Aorta (tissue), 5 donors: ENCODE measurements at regions of chr2 and their contacts with region 1.

Region 1: DNA sequence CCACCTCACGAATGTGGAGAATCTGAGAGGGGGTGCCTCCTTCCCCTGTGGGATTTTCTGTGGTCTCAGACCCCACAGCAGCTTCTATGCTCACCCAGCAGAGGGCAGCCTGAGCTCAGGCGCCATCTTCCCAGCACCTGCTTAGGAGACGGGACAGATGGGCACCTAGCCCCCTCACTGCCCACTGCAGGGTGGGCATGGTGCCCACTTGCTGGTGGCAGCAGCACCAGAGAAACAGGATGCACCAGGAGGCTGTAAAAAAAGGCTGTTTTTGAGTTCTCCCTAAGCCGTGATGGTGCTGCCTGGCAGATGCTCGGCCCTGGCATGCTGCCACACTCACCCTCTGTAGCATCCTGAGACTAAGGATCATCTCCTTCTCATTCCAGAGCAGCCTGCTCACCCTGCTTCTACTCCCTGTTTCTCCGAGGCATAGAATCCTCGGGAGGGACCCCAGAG is 19.1 kb upstream of the SLC20A1 start:
- DNase-seq: peak; percentile 79 to 88
- ATAC-seq: peak; percentile 87
- H3K4me3 ChIP-seq: no peak overlapping the region
- H3K27ac ChIP-seq: peak overlapping the region in 1 of 2 donors; percentile 91
- H3K4me1 ChIP-seq: no peaks in the 10 kb centered on the region
- H3K27me3 ChIP-seq: no peaks in the 10 kb centered on the region

Region 2: GRCh38 chr2:112519506-112519905 is 107.1 kb before region 1 on chr2:
- intact Hi-C with region 1: no loop called
- DNase-seq: no peak
- ATAC-seq: no peak
- H3K4me3 ChIP-seq: no peak overlapping the region
- H3K27ac ChIP-seq: no peak overlapping the region
- H3K4me1 ChIP-seq: no peaks in the 10 kb centered on the region
- H3K27me3 ChIP-seq: no peaks in the 10 kb centered on the region

Region 3: DNA sequence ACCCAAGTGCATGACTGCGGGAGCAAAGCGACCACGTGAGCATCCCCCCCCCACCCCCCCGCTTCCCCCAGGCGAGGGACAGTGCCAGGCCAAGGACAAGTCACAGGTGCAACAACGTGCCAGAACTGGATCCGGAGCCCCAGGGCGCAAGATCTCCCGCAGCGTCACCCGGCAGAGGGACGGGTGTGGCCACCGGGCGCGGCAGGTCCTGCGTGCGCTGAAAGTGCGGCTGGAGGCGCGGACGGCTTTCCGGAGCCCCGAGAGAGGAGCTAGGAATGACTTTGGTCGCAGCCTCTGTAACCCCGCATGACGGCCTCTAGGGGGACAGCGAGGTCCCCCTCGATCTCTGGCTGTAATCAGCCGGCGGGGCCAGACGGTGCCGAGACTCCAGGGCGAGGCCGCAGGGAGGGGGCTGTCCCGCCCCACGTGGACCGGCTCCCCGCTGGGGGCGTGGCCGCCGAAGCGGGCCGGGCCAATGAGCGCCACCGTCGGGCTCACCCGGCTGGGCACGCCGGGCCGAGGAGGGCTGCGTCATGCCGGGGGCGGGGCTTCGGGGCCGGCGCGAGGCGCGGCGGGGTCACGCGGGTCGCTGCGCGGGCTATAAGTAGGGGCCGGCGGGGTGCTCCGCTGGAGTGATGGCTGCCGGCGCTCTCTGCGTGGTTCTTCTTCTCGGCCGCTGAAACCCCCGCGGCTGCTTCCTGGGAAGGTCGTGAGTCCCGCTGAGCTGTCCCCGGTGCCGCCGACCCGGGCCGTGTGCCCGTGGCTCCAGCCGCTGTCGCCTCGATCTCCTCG is 18.9 kb after region 1 on chr2 and contains the start of gene SLC20A1:
- intact Hi-C with region 1: loop called in 1 of 2 experiments (anchors 2 kb)
- DNase-seq: peak; percentile 97 to 99
- ATAC-seq: peak; percentile 98
- H3K4me3 ChIP-seq: peak within 1 kb of the TSS; percentile 89 to 92
- H3K27ac ChIP-seq: peak within 1 kb of the TSS; percentile 37 to 96
- H3K4me1 ChIP-seq: peaks cover 2 to 4% of the 10 kb centered on the region in 2 donors
- H3K27me3 ChIP-seq: peaks cover 0 to 2% of the 10 kb centered on the region in 2 donors
- total RNA-seq, gene SLC20A1: 51.9 to 82.6 TPM

Region 4: DNA sequence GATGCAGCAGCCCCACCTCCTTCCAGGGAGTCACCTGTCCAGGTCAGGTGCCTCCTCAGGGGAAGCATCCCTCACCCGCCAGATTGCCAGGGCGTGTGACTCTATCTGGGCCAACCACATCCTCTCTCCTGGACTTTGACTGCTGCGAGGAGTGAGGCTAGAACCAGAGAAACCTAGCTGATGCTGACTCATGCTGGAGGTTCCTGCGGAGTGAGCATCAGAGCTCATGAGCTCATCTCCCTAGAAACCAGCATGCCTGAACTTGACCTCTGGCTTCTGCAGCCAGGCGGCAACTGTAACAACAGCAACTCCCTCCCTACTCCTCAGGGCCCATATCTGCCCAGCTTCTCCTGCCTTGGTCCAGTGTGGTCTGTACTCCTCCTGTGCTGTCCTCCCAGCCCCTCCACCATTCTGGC is 65.9 kb after region 1 on chr2:
- intact Hi-C with region 1: loop called in 1 of 2 experiments (anchors 1 kb)
- DNase-seq: peak in 1 of 2 donors; percentile 72
- ATAC-seq: peak; percentile 55
- H3K4me3 ChIP-seq: no peak overlapping the region
- H3K27ac ChIP-seq: no peak overlapping the region
- H3K4me1 ChIP-seq: no peaks in the 10 kb centered on the region
- H3K27me3 ChIP-seq: no peaks in the 10 kb centered on the region

Region 5: DNA sequence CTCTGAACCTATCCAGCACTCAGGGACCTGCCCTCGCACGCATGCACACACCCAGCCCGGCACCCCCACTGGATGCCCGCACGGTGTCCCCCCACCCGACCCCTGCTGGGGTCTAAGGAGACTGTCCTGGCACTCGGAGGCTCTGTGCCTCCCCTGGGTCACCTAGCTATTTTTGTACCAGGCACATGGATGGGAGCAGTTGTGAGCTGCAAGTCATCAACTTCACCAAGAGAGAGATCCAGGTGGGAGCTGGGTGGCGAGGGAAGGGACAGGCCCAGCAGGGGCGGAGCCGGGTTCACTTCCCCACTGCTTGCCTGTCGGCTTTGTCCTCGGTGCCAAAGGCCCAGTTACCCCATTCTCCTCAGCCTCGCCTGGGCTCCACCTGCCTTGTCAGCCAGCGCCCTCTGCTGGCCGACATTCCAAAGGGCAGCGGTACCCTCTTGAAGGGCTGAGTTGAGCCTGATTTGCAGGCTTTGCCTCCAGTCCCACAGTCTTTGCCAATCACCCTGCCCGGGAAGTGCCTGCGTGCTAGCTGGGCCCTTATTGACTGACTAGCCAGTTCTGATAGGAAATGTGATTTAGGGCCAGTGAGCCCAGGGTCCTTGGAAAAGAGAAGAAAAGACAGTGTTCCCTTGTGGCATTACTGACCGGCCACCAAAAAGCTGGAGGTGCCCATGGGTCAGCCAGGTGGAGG is 100.0 kb after region 1 on chr2:
- intact Hi-C with region 1: loop called in 1 of 2 experiments (anchors 2 kb)
- DNase-seq: peak; percentile 94 to 95
- ATAC-seq: peak; percentile 89
- H3K4me3 ChIP-seq: no peak overlapping the region
- H3K27ac ChIP-seq: no peak overlapping the region
- H3K4me1 ChIP-seq: no peaks in the 10 kb centered on the region
- H3K27me3 ChIP-seq: no peaks in the 10 kb centered on the region